ENCODE measurements at regions of chr2 and their contacts with region 1.

Region 1: DNA sequence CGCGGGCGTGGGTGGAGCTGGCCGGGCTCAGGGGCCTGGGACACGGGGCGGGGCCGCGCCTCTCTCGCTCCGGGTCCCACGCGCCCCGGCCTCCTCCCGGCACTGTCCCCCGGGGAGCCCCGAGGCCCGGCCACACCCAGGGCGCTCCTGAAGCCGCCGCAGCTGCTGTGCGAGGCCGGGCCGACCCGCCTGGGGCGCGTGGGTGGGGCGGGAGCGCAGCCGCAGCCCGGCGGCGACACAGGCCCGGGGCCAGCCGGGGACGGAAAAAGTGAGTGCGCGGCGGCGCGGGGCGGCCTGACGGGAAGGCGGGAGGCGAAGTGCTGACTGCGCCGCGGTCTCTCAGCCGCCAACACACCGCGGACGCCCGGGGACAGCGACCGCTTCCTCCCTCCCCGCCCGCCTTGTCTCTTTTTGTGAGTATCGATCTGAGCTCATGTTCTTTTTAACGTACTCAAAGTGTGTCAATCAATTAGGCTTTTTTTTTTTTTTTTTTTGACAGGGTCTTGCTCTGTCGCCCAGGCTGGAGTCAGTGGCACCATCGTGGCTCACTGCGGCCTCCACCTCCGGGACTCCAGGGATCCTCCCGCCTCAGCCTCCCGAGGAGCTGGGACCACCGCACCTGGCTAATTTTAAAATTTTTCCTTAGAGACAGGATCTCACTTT is 14.5 kb downstream of the PDCD1 start:
- DNase-seq: peak; percentile 79
- ATAC-seq: peak; percentile 91
- H3K4me3 Mint-ChIP-seq: peak overlapping the region; percentile 80
- H3K27ac Mint-ChIP-seq: peak overlapping the region; percentile 66
- H3K4me1 Mint-ChIP-seq: peaks cover 30% of the 10 kb centered on the region
- H3K27me3 Mint-ChIP-seq: no peaks in the 10 kb centered on the region
- CTCF ChIP-seq: no peak

Region 2: DNA sequence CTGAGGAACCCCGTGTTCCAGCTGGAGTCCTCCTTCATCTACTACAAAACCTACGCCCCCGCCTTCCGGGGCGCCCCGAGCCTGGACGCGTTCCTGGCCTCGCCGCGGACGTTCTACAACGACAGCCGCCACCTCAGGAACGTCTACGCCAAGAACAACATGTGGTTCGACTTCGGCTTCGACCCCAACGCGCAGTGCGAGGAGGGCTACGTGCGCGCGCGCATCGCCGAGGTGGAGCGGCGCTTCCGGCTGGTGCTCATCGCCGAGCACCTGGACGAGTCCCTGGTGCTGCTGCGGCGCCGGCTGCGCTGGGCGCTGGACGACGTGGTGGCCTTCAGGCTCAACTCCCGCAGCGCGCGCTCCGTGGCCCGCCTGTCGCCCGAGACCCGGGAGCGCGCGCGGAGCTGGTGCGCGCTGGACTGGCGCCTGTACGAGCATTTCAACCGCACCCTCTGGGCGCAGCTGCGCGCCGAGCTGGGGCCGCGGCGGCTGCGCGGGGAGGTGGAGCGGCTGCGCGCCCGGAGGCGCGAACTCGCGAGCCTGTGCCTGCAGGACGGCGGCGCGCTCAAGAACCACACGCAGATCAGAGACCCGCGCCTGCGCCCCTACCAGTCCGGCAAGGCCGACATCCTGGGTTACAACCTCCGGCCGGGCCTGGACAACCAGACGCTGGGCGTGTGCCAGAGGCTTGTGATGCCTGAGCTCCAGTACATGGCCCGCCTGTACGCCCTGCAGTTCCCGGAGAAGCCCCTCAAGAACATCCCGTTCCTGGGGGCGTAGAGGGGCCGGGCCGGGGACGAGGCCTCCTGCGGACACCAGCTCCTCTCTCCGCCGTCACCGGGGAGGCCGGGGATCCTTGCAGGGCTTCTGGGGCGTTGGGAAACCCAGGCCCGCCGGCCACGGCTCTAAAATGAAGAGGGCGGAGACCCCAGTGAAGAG is 40.5 kb before region 1 on chr2:
- CTCF ChIA-PET with region 1: no interaction called
- POLR2A ChIA-PET with region 1: interaction called, 3 read pairs
- intact Hi-C with region 1: loop called (anchors 5 kb)
- DNase-seq: peak; percentile 45
- ATAC-seq: peak; percentile 62
- H3K4me3 Mint-ChIP-seq: peak overlapping the region; percentile 62
- H3K27ac Mint-ChIP-seq: no peak overlapping the region
- H3K4me1 Mint-ChIP-seq: peaks cover 17% of the 10 kb centered on the region
- H3K27me3 Mint-ChIP-seq: peaks cover 6% of the 10 kb centered on the region
- CTCF ChIP-seq: no peak

Measured in activated B cell treated with CpG ODN at 0.5 μM for 24 hours (primary cell).